CD4-positive, alpha-beta T cell (primary cell): ENCODE measurements at regions of chr10 and their contacts with region 1.

Region 1: DNA sequence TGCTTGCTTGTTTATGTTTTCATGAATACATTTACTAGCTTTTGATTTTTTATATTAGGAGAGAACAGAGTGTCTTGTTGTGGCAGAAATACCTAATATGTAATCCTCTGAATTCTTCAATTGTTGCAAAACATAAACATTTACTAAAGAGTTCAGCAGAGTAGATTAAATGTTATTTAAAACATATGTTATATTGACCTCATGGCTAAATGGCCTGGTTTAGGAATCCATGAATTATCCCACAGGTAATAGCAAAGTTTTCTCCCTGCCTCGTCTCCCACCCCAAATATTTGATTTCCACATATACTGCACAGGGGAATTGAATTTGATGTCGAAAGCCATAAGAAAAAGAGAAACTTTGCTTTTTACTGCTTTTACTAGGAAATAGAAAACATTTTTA is 111.8 kb downstream of the ADK start:
- DNase-seq: no peak
- ATAC-seq: no peak
- H3K4me3 ChIP-seq: no peak overlapping the region
- H3K4me3 Mint-ChIP-seq: no peak overlapping the region
- H3K27ac ChIP-seq: no peak overlapping the region
- H3K27ac Mint-ChIP-seq: no peak overlapping the region
- H3K4me1 ChIP-seq: peaks cover 4% of the 10 kb centered on the region
- H3K4me1 Mint-ChIP-seq: peaks cover 6% of the 10 kb centered on the region
- H3K27me3 ChIP-seq: no peaks in the 10 kb centered on the region
- H3K27me3 Mint-ChIP-seq: no peaks in the 10 kb centered on the region
- CTCF ChIP-seq: no peak

Region 2: DNA sequence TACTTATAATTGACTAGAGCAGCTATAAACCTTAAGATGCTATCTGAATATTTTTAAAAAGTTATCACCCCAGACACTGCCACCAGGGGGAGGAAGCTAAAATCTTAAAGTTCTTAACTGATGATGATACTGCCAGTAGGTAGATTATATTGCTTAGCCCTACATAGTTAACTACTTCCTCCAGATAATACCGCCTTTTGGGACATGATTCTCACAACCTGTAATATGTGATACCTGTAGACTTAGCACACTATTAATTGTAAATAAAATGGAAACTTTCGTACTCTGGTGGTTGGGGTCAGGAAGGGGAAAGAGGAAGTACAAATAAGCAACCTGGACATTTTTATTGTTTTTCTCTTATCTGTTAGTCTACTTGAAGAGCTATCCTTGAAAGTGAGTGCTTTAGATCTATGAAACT is 157.1 kb after region 1 on chr10:
- CTCF ChIA-PET with region 1: no interaction called
- POLR2A ChIA-PET with region 1: no interaction called
- intact Hi-C with region 1: loop called in 1 of 2 experiments (anchors 5 kb)
- DNase-seq: peak in 10 of 14 experiments; percentile 5 to 63 (median 25)
- ATAC-seq: peak; percentile 60
- H3K4me3 ChIP-seq: no peak overlapping the region
- H3K4me3 Mint-ChIP-seq: no peak overlapping the region
- H3K27ac ChIP-seq: no peak overlapping the region
- H3K27ac Mint-ChIP-seq: no peak overlapping the region
- H3K4me1 ChIP-seq: no peaks in the 10 kb centered on the region
- H3K4me1 Mint-ChIP-seq: peaks cover 7% of the 10 kb centered on the region
- H3K27me3 ChIP-seq: no peaks in the 10 kb centered on the region
- H3K27me3 Mint-ChIP-seq: no peaks in the 10 kb centered on the region
- CTCF ChIP-seq: peak; percentile 74

Region 3: DNA sequence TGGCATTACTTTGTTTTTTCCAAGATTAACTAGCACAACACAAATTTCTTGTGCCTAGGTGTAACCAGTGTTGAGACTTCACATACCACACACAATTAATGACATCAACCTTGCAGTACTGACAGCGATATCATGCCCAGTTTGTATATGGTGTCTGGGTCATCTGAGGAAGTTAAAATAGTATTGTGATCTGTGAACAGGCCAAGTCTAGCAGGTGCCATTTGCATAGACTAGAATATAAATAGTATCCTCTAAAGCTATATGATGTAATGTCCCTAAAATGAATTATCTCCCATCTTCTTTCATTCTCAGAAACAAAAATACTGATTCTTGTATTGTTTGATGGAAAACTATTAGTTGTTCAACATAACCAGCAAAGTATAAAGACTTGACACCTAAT is 387.8 kb after region 1 on chr10:
- CTCF ChIA-PET with region 1: no interaction called
- POLR2A ChIA-PET with region 1: no interaction called
- intact Hi-C with region 1: no loop called
- DNase-seq: no peak
- ATAC-seq: no peak
- H3K4me3 ChIP-seq: no peak overlapping the region
- H3K4me3 Mint-ChIP-seq: no peak overlapping the region
- H3K27ac ChIP-seq: no peak overlapping the region
- H3K27ac Mint-ChIP-seq: no peak overlapping the region
- H3K4me1 ChIP-seq: no peaks in the 10 kb centered on the region
- H3K4me1 Mint-ChIP-seq: peaks cover 14% of the 10 kb centered on the region
- H3K27me3 ChIP-seq: no peaks in the 10 kb centered on the region
- H3K27me3 Mint-ChIP-seq: no peaks in the 10 kb centered on the region
- CTCF ChIP-seq: no peak